SK-N-SH (cell line): ENCODE measurements at regions of chr1 and their contacts with region 1.

Region 1: DNA sequence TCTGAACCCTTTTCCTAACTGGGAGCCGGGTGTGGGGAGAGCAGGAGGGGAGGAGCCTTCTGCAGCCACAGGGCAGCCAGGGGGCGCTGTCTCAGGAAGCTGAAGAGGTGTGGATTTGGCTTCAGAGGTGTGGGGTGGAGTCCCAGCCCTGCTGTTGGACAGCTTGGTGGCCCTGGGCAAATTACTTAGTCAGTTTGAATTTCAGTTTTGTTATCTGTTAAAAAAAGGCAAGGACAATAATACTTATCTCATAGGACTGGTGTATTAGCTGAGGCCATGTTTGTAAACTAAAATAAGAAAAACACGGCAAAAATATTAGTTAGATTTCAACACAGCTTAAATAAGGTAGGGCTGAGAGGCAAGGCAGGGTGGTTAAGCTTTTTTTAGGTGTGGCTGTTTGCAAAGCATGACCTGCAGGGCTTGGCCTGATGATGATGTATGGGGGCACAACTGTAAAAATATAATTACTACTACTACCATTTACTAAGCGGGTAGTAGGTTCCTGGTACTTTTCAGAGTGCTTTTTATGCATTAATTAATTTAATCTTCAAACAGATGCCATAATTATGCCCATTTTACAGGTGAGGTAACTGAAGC is 111.8 kb downstream of the PLXNA2 start:
- DNase-seq: peak; percentile 72
- H3K4me3 ChIP-seq: no peak overlapping the region; a peak in 1 of 4 replicates
- H3K27ac ChIP-seq: no peak overlapping the region
- H3K4me1 ChIP-seq: peaks cover 9 to 46% of the 10 kb centered on the region in 2 experiments; a peak in 2 of 4 replicates
- H3K27me3 ChIP-seq: no peaks in the 10 kb centered on the region
- CTCF ChIP-seq: peak; percentile 94
- EP300 ChIP-seq: no peak
- RAD21 ChIP-seq: peak; percentile 61

Region 2: GRCh38 chr1:207838156-207839082 is 294.0 kb before region 1 on chr1:
- CTCF ChIA-PET with region 1: no interaction called
- POLR2A ChIA-PET with region 1: no interaction called
- DNase-seq: no peak
- H3K4me3 ChIP-seq: no peak overlapping the region
- H3K27ac ChIP-seq: no peak overlapping the region
- H3K4me1 ChIP-seq: peaks cover 0 to 3% of the 10 kb centered on the region in 2 experiments; a peak in 1 of 4 replicates
- H3K27me3 ChIP-seq: no peaks in the 10 kb centered on the region
- CTCF ChIP-seq: no peak
- EP300 ChIP-seq: no peak
- RAD21 ChIP-seq: no peak

Region 3: DNA sequence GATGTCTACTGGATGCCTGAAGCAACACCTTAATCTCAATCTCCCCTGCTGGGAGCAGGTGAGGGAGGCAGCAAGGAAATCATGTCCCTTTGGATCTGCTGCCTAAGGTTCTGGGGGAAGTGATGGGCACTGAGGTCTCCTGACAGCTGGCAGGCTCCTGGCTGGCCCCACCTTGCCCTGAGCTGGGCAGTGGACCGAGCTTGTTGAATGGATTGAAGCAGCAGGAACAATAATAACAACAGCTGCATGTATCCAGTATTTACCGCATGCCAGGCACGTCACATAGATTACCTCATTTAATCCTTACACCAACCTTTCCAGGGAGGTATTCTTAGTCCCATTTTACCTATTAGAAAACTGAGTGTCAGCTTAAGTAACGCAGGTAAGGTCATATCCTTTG is 22.1 kb before region 1 on chr1:
- CTCF ChIA-PET with region 1: interaction called, 10 read pairs
- POLR2A ChIA-PET with region 1: no interaction called
- DNase-seq: no peak
- H3K4me3 ChIP-seq: no peak overlapping the region
- H3K27ac ChIP-seq: no peak overlapping the region
- H3K4me1 ChIP-seq: peaks cover 9 to 16% of the 10 kb centered on the region in 2 experiments; a peak in 3 of 4 replicates
- H3K27me3 ChIP-seq: no peaks in the 10 kb centered on the region
- CTCF ChIP-seq: no peak
- EP300 ChIP-seq: no peak
- RAD21 ChIP-seq: no peak

Region 4: GRCh38 chr1:208150833-208151458 is 18.6 kb after region 1 on chr1:
- CTCF ChIA-PET with region 1: interaction called, 51 read pairs
- POLR2A ChIA-PET with region 1: no interaction called
- DNase-seq: no peak
- H3K4me3 ChIP-seq: no peak overlapping the region
- H3K27ac ChIP-seq: no peak overlapping the region
- H3K4me1 ChIP-seq: peaks cover 0 to 17% of the 10 kb centered on the region in 2 experiments; a peak in 1 of 4 replicates
- H3K27me3 ChIP-seq: no peaks in the 10 kb centered on the region
- CTCF ChIP-seq: no peak
- EP300 ChIP-seq: no peak
- RAD21 ChIP-seq: no peak